Activated CD4-positive, alpha-beta T cell treated with anti-CD3 and anti-CD28 coated beads, Interleukin-2, amount 10 ng/mL, durations not matched to agents 24 days and 14 days (primary cell): ENCODE measurements at regions of chr2 and their contacts with region 1.

Region 1: GRCh38 chr2:26244309-26245121 is at the starts of genes HADHA and HADHB:
- DNase-seq: peak; percentile 94
- H3K4me3 Mint-ChIP-seq: peak within 1 kb of the TSS; percentile 100
- H3K27ac Mint-ChIP-seq: peak within 1 kb of the TSS; percentile 100
- H3K4me1 Mint-ChIP-seq: peaks cover 53% of the 10 kb centered on the region
- H3K27me3 Mint-ChIP-seq: peaks cover 6% of the 10 kb centered on the region
- total RNA-seq, gene HADHA: 110 and 112 TPM in 2 replicates
- total RNA-seq, gene HADHB: 81.2 and 86.6 TPM in 2 replicates

Region 2: GRCh38 chr2:26033818-26034636 is 210.5 kb before region 1 on chr2 and contains the start of gene RAB10:
- intact Hi-C with region 1: loop called (anchors 2 kb)
- DNase-seq: peak; percentile 100
- H3K4me3 Mint-ChIP-seq: peak within 1 kb of the TSS; percentile 93
- H3K27ac Mint-ChIP-seq: peak within 1 kb of the TSS; percentile 95
- H3K4me1 Mint-ChIP-seq: peaks cover 26% of the 10 kb centered on the region
- H3K27me3 Mint-ChIP-seq: peaks cover 1% of the 10 kb centered on the region
- total RNA-seq, gene RAB10: 133 and 141 TPM in 2 replicates

Region 3: DNA sequence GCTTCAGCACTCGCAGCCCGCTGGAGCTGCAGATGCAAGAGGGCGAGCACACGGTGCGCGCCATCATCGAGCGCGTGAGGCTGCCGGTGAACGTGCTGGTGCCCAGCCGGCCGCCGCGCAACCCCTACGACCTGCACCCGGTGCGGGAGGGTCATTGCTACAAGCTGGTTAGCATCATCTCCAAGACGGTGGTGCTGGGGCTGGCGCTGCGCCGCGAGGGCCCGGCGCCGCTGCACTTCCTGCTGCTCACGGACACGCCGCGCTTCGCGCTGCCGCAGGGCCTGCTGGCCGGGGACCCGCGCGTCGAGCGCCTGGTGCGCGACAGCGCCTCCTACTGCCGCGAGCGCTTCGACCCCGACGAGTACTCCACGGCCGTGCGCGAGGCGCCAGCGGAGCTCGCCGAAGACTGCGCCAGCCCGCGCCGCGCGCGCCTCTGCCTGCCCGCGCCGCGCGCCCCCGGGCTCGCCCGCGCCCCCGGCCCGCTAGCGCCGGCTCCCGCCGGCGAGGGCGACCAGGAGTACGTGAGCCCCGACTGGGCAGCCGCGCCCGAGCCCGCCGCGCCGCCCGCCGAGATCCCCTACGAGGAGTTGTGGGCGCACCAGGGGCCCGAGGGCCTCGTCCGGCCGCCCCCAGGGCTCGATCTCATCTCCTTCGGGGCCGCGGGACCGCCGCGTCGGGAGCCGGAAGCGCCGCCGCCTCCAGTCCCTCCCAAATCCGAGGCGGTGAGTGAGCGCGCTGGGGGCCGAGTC is 59.8 kb before region 1 on chr2:
- intact Hi-C with region 1: loop called (anchors 5 kb)
- DNase-seq: peak; percentile 97
- H3K4me3 Mint-ChIP-seq: peak overlapping the region; percentile 83
- H3K27ac Mint-ChIP-seq: peak overlapping the region; percentile 58
- H3K4me1 Mint-ChIP-seq: peaks cover 13% of the 10 kb centered on the region
- H3K27me3 Mint-ChIP-seq: peaks cover 12% of the 10 kb centered on the region

Region 4: DNA sequence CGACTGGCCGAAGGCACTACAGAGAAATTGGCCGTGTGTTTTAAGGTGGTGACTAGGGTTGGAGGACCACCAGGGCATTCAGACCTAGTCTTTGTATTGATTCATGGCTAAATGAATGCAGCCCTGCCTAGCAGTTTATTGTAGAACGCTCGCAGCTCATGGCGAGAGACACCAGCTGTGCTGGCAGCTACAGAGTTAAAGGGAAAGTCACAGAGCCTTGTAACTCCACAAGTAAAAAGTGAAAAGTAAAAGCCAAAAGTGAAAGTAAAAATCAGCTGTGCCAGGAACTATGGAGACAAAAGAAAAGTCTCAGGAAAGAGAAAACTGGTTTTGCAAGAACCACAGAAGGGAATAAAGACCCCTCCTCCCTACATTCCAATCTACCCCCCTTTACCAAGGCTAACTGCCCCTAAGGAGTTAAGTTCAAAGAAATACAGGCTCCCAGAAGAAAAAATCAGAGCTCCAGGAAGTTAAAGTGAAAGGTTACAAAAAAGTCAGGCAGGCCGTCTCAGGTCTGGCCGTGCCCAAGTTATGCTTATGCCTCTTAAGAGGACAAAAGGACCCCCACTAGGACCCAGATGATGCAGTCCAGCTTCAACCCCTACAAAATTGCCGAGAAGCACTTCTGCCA is 55.1 kb after region 1 on chr2:
- intact Hi-C with region 1: loop called (anchors 1 kb)
- DNase-seq: peak; percentile 74
- H3K4me3 Mint-ChIP-seq: no peak overlapping the region
- H3K27ac Mint-ChIP-seq: no peak overlapping the region
- H3K4me1 Mint-ChIP-seq: no peaks in the 10 kb centered on the region
- H3K27me3 Mint-ChIP-seq: peaks cover 18% of the 10 kb centered on the region

Region 5: GRCh38 chr2:26330113-26330549 is 85.6 kb after region 1 on chr2:
- intact Hi-C with region 1: loop called (anchors 1 kb)
- DNase-seq: peak; percentile 95
- H3K4me3 Mint-ChIP-seq: no peak overlapping the region
- H3K27ac Mint-ChIP-seq: peak overlapping the region; percentile 36
- H3K4me1 Mint-ChIP-seq: peaks cover 18% of the 10 kb centered on the region
- H3K27me3 Mint-ChIP-seq: peaks cover 2% of the 10 kb centered on the region

Region 6: GRCh38 chr2:26345545-26346453 is 101.3 kb after region 1 on chr2 and contains the start of gene SELENOI:
- intact Hi-C with region 1: loop called (anchors 1 kb)
- DNase-seq: peak; percentile 100
- H3K4me3 Mint-ChIP-seq: peak within 1 kb of the TSS; percentile 96
- H3K27ac Mint-ChIP-seq: peak within 1 kb of the TSS; percentile 96
- H3K4me1 Mint-ChIP-seq: peaks cover 21% of the 10 kb centered on the region
- H3K27me3 Mint-ChIP-seq: no peaks in the 10 kb centered on the region
- total RNA-seq, gene SELENOI: 63.7 and 68.8 TPM in 2 replicates